Tibial artery (tissue), 4 donors: ENCODE measurements at regions of chr7 and their contacts with region 1.

Region 1: DNA sequence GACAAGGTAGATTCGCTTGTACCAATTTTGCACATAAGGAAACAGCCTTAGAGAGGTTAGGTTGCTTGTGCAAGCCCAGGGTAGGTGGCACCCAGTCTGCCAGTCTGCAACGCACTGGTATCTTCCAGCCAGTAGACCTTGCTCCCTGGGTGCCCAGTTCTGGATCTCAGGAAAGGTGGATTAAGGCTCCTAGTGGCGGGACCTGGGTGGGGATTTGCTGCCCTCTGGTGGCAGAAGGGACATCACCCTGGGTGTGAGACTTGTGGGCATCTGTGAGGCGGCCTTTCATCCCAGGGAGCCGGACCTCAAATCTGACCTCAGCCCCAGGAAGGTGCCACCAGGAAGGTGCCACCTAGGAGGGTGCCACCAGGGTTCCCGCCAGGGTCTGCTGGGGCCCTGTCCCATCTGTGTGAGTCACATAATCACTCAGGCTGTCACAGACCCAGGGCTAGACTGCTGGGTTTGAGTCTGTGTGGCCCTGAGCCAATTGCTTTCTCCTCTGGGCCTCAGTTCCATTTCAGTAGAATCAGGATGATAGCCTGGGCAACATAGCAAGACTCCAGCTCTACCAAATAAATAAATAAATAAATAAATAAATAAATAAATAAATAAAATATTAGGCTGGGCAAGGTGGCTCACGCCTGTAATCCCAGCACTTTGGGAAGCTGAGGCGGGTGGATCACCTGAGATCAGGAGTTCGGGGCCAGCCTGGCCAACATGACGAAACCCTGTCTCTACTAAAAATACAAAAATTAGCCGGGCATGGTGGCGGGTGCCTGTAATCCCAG is 5.3 kb upstream of the PRKRIP1 start:
- DNase-seq: peak; percentile 75 to 84
- H3K4me3 ChIP-seq: no peak overlapping the region
- H3K27ac ChIP-seq: no peak overlapping the region
- H3K4me1 ChIP-seq: peaks cover 0 to 5% (median 0%) of the 10 kb centered on the region in 4 donors
- H3K27me3 ChIP-seq: no peaks in the 10 kb centered on the region
- CTCF ChIP-seq: peak; percentile 80 to 91

Region 2: DNA sequence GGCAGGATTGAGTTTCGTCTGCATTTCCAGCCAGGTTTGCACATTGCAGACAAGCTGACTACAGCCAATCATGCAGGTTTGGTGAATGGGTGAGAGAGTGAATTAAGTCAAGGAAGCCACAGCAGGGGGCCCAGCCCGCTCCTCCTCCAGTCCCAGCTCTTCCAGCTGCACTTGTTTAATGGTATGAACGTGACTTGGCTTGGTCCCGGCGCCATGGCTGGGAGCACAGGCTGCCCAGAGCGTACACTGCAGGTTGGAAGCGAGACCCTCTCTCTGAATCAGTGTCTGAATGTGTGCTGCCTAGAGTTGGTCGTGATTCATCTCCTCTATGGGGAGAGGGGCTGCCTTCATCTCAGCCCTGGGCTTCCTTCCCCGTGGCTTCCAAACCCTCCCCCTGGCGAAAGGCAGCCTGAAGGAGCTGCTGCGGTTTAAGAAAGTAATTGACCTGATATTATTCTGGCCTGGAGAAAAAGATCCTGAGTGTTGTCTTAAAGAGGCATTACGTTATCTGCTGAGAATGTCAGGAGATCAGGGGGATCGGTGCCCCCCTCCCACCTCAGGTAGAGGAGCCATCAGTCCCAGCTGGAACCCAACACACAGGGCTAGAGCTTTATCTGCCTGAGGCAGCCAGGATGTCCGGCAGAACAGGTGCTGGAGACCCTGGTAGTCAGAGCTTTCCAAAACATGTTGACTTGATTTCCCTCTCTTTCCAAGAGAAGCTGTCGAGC is 896.1 kb before region 1 on chr7:
- intact Hi-C with region 1: no loop called
- DNase-seq: no peak
- H3K4me3 ChIP-seq: no peak overlapping the region
- H3K27ac ChIP-seq: no peak overlapping the region
- H3K4me1 ChIP-seq: no peaks in the 10 kb centered on the region
- H3K27me3 ChIP-seq: peaks cover 0 to 27% of the 10 kb centered on the region in 2 donors
- CTCF ChIP-seq: no peak

Region 3: DNA sequence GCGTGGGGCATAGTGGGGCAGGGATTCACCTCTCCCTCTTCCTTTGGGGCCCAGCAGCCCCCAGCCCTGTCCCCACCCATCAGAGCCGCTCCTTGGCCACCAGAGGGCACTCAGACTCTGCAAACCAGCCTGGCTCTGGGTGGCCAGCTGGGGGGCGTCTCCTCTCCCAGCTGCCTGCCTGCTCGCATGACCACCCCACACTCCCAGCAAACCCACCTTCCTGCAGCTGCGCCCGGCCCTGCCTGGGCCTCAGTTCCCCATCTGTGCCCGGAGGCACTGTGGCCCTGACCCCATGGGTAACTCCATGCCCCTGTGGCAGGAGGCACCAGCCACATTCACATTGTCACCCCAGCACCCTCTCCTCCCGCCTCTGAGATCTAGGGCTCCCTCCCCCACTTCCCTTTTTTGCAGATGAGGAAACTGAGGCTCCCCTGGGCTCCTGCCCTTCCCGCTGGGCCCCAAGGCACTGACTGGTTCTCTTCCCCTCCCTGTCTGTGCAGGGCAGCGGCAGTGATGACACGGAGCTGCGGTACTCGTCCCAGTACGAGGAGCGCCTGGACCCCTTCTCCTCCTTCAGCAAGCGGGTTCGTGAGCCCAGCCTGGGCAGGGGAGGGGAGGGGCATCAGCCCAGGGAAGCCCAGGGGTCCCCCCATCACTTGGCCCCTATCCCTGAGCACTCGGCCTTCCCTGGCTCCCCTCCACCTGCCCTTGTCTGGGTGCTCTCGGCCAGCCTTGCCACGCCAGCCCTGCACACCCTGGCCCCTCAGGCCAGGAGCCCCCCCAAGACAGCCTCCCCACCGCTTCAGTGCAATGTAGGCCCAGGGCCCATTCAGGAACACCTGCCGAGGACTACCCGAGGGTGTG is 111.1 kb before region 1 on chr7:
- intact Hi-C with region 1: loop called (anchors 2 kb)
- DNase-seq: no peak
- H3K4me3 ChIP-seq: no peak overlapping the region
- H3K27ac ChIP-seq: no peak overlapping the region
- H3K4me1 ChIP-seq: peaks cover 0 to 3% (median 0%) of the 10 kb centered on the region in 4 donors
- H3K27me3 ChIP-seq: no peaks in the 10 kb centered on the region
- CTCF ChIP-seq: peak; percentile 74 to 76

Region 4: GRCh38 chr7:102284891-102285539 is 105.9 kb before region 1 on chr7:
- intact Hi-C with region 1: loop called (anchors 2 kb)
- DNase-seq: peak in 1 of 2 donors; percentile 54
- H3K4me3 ChIP-seq: peak overlapping the region in 1 of 2 donors; percentile 92
- H3K27ac ChIP-seq: peak overlapping the region in 1 of 2 donors; percentile 75
- H3K4me1 ChIP-seq: peaks cover 0 to 27% (median 17%) of the 10 kb centered on the region in 4 donors
- H3K27me3 ChIP-seq: no peaks in the 10 kb centered on the region
- CTCF ChIP-seq: no peak